Lower leg skin (tissue), 4 donors: ENCODE measurements at regions of chr1 and their contacts with region 1.

Region 1: DNA sequence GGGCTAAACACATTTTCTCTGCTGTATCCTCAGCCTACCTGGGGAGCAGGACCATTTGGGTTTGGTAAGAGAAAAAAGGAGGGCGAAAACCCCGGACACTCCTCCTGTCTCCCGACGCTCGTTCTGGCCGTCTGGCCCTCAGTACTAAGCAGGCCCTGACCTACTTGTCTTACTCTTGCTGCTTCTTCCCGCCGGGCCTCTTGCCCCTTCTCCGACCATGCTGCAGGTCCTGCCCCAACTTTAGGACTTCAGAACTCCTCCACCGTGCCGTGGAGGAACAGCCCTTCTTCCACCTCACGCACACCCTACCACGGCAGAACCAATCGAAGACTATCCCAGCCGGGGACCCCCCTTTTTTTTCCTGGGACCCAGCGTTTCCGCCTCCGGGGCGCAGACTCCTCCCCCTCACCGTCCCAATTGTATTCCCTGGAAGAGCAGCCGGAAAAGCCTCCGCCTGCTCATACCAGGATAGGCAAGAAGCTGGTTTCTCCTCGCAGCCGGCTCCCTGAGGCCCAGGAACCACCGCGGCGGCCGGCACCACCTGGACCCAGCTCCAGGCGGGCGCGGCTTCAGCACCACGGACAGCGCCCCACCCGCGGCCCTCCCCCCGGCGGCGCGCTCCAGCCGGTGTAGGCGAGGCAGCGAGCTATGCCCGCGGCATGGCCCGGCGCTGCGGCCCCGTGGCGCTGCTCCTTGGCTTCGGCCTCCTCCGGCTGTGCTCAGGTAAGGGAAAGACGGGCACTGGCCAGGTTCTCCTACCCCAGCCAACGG is at the start of gene CHRNB2:
- DNase-seq: peak in 1 of 2 donors; percentile 89
- H3K4me3 ChIP-seq: no peak within 1 kb of the TSS
- CTCF ChIP-seq: no peak
- POLR2A ChIP-seq: no peak
- total RNA-seq, gene CHRNB2: 0.08 to 0.52 (median 0.26) TPM

Region 2: GRCh38 chr1:154546264-154547063 is 21.1 kb before region 1 on chr1:
- intact Hi-C with region 1: no loop called
- DNase-seq: no peak
- H3K4me3 ChIP-seq: no peak overlapping the region
- CTCF ChIP-seq: peak in 1 of 3 donors; percentile 61
- POLR2A ChIP-seq: no peak

Region 3: DNA sequence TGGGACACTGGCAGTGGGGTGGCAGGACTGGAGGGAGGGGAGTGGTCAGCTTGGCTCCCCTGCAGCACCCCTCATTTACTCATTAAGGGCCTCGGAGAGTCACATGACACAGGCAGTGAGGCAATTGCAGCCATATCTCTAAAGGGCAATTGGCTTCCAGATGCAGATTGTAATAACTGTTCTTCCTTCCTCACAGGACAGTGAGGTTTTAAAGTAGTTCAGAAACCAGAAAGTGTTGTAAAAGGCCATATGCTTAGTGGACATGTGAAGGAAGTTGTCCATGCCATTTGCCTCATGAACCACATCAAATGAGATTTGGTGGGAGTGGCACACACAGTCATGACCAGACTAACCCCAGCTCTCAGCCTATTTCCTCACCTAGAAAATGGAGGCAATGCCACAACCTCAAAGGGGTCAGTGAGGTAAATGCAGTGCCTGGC is 652.0 kb after region 1 on chr1:
- intact Hi-C with region 1: loop called (anchors 5 kb)
- DNase-seq: no peak
- H3K4me3 ChIP-seq: no peak overlapping the region
- CTCF ChIP-seq: no peak
- POLR2A ChIP-seq: no peak